Activated CD8-positive, alpha-beta T cell treated with anti-CD3 and anti-CD28 coated beads for 36 hours (primary cell): ENCODE measurements at regions of chr3 and their contacts with region 1.

Region 1: GRCh38 chr3:142578327-142579223 is at the start of gene ATR:
- DNase-seq: peak; percentile 98
- ATAC-seq: peak; percentile 96
- H3K4me3 Mint-ChIP-seq: peak within 1 kb of the TSS; percentile 98
- H3K27ac Mint-ChIP-seq: peak within 1 kb of the TSS; percentile 95
- H3K4me1 Mint-ChIP-seq: peaks cover 43% of the 10 kb centered on the region
- H3K27me3 Mint-ChIP-seq: no peaks in the 10 kb centered on the region
- CTCF ChIP-seq: no peak
- total RNA-seq, gene ATR: 34.2 to 39.0 TPM

Region 2: DNA sequence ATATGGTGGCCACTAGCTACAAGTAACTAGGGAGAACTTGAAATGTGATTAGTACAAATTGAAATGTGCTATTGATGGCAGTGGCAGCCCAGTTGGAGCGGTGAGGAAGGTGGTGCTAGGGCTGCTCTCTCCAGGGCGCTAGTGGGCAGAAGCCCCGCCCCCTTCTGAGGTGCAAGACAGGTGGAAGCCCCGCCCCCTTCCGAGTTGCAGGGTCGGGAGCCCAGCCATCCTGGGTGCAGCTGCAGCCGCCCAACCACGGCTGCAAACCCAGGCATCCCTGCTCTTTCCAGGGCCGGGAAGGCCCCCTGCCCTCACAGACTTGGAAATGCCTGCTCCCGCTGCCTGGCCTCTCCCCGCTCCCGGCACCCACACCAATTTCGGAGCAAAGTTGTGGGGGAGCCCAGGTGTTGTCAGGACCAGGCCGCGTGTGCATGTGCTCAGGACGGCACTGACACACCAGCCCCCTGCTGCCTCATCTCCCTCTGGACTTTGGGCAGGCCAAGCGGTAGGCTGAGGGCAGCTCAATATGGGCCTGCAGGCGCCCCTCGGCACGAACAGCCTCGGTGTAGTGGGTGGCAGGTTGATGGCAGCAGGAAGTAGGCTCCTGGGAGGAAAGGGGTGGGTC is 10.1 kb before region 1 on chr3:
- CTCF ChIA-PET with region 1: interaction called, 3 read pairs
- POLR2A ChIA-PET with region 1: interaction called, 10 read pairs
- intact Hi-C with region 1: no loop called
- DNase-seq: no peak
- ATAC-seq: no peak
- H3K4me3 Mint-ChIP-seq: no peak overlapping the region
- H3K27ac Mint-ChIP-seq: no peak overlapping the region
- H3K4me1 Mint-ChIP-seq: peaks cover 14% of the 10 kb centered on the region
- H3K27me3 Mint-ChIP-seq: no peaks in the 10 kb centered on the region
- CTCF ChIP-seq: no peak

Region 3: GRCh38 chr3:142588703-142589375 is 10.3 kb after region 1 on chr3:
- CTCF ChIA-PET with region 1: no interaction called
- POLR2A ChIA-PET with region 1: interaction called, 11 read pairs
- intact Hi-C with region 1: no loop called
- DNase-seq: no peak
- ATAC-seq: no peak
- H3K4me3 Mint-ChIP-seq: no peak overlapping the region
- H3K27ac Mint-ChIP-seq: no peak overlapping the region
- H3K4me1 Mint-ChIP-seq: no peaks in the 10 kb centered on the region
- H3K27me3 Mint-ChIP-seq: peaks cover 3% of the 10 kb centered on the region
- CTCF ChIP-seq: no peak

Region 4: GRCh38 chr3:142595951-142596725 is 17.6 kb after region 1 on chr3 and contains the start of gene PLS1:
- CTCF ChIA-PET with region 1: interaction called, 4 read pairs
- POLR2A ChIA-PET with region 1: interaction called, 21 read pairs
- intact Hi-C with region 1: no loop called
- DNase-seq: peak; percentile 78
- ATAC-seq: peak; percentile 94
- H3K4me3 Mint-ChIP-seq: peak within 1 kb of the TSS; percentile 95
- H3K27ac Mint-ChIP-seq: peak within 1 kb of the TSS; percentile 85
- H3K4me1 Mint-ChIP-seq: peaks cover 14% of the 10 kb centered on the region
- H3K27me3 Mint-ChIP-seq: no peaks in the 10 kb centered on the region
- CTCF ChIP-seq: no peak
- total RNA-seq, gene PLS1: 4.7 to 5.6 TPM

Region 5: DNA sequence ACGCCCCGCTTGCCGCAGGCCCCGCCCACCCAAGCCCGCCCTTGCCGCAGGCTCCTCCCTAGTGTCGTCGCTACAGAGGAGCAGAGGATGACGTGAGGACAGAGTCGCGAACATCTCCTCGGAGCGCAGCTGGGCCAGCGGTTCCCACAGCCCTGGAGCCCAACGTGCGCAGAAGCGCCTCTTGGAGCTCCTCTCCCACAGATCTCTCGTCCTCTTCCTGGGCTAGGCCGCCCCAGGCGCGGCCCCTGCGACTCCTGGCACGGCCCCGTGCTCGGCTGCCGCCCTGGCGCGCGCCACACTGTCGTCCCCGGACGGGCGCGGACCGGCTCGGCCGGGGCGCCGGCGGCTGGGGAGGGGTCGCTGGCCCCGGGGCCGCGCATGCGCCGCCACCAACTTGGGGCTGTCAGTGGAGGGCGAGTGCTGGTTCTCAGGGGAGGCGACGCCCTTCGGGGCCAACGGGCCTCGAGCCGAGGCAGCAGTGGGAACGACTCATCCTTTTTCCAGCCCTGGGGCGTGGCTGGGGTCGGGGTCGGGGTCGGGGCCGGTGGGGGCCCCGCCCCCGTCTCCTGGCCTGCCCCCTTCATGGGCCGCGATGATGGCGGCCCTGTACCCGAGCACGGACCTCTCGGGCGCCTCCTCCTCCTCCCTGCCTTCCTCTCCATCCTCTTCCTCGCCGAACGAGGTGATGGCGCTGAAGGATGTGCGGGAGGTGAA is 145.6 kb after region 1 on chr3 and contains the start of gene TRPC1:
- CTCF ChIA-PET with region 1: no interaction called
- POLR2A ChIA-PET with region 1: interaction called, 3 read pairs
- intact Hi-C with region 1: loop called (anchors 10 kb)
- DNase-seq: peak; percentile 80
- ATAC-seq: peak; percentile 96
- H3K4me3 Mint-ChIP-seq: peak within 1 kb of the TSS; percentile 85
- H3K27ac Mint-ChIP-seq: peak within 1 kb of the TSS; percentile 88
- H3K4me1 Mint-ChIP-seq: peaks cover 6% of the 10 kb centered on the region
- H3K27me3 Mint-ChIP-seq: peaks cover 37% of the 10 kb centered on the region
- CTCF ChIP-seq: no peak
- total RNA-seq, gene TRPC1: 2.4 to 3.4 TPM

Region 6: DNA sequence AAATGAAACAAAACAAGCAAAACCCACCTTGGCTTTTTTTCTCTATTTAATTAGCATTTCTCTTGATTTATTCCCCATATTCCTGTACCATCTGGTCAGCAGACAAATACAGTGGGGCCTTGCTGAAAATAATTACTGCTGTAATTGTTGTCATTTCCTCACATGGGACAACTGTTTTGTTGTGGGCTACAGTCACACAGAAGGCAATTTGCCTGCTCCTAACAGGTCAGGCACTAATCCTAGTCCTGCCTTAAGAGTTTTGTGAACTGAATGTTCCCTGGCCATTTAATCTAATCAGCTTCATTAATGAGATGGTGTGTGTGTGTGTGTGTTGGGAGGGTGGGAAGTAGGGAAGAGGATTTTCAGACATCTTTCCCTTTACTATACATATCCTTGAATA is 156.9 kb after region 1 on chr3:
- CTCF ChIA-PET with region 1: no interaction called
- POLR2A ChIA-PET with region 1: no interaction called
- intact Hi-C with region 1: no loop called
- DNase-seq: no peak
- ATAC-seq: no peak
- H3K4me3 Mint-ChIP-seq: no peak overlapping the region
- H3K27ac Mint-ChIP-seq: no peak overlapping the region
- H3K4me1 Mint-ChIP-seq: no peaks in the 10 kb centered on the region
- H3K27me3 Mint-ChIP-seq: no peaks in the 10 kb centered on the region
- CTCF ChIP-seq: no peak

Region 7: GRCh38 chr3:143001369-143002082 is 423.0 kb after region 1 on chr3 and contains the start of gene U2SURP:
- CTCF ChIA-PET with region 1: interaction called, 8 read pairs
- POLR2A ChIA-PET with region 1: interaction called, 18 read pairs
- intact Hi-C with region 1: loop called (anchors 5 kb)
- DNase-seq: peak; percentile 96
- ATAC-seq: peak; percentile 90
- H3K4me3 Mint-ChIP-seq: peak within 1 kb of the TSS; percentile 92
- H3K27ac Mint-ChIP-seq: peak within 1 kb of the TSS; percentile 100
- H3K4me1 Mint-ChIP-seq: peaks cover 29% of the 10 kb centered on the region
- H3K27me3 Mint-ChIP-seq: peaks cover 4% of the 10 kb centered on the region
- CTCF ChIP-seq: no peak
- total RNA-seq, gene U2SURP: 160 to 174 TPM